AG04450 (cell line): ENCODE measurements at regions of chr4 and their contacts with region 1.

Region 1: GRCh38 chr4:30721185-30722091 is 1.3 kb downstream of the PCDH7 start:
- DNase-seq: no peak
- H3K4me3 ChIP-seq: peak overlapping the region; percentile 87
- H3K27ac ChIP-seq: no peak overlapping the region
- H3K27me3 ChIP-seq: no peaks in the 10 kb centered on the region
- CTCF ChIP-seq: no peak

Region 2: DNA sequence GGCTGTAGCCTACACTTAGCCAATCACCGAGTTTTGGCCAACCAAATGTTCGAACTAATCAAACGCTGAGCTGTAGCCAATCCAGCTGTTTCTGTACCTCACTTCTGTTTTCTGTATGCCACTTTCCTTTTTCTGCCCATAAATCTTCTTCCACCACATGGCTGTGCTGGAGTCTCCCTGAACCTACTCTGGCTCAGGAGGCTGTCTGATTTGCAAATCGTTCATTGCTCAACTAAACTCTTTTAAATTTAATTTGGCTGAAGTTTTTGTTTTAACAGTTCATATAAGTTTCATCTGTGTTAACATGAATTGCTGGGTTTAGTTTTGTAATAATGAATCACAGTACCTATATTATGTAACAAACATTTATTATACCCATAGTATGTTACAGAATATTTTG is 162.0 kb before region 1 on chr4:
- CTCF ChIA-PET with region 1: no interaction called
- POLR2A ChIA-PET with region 1: no interaction called
- DNase-seq: no peak
- H3K4me3 ChIP-seq: no peak overlapping the region
- H3K27ac ChIP-seq: no peak overlapping the region
- H3K27me3 ChIP-seq: no peaks in the 10 kb centered on the region
- CTCF ChIP-seq: no peak

Region 3: GRCh38 chr4:30770049-30770549 is 48.7 kb after region 1 on chr4:
- CTCF ChIA-PET with region 1: interaction called, 10 read pairs
- POLR2A ChIA-PET with region 1: interaction called, 3 read pairs
- DNase-seq: no peak
- H3K4me3 ChIP-seq: no peak overlapping the region
- H3K27ac ChIP-seq: no peak overlapping the region
- H3K27me3 ChIP-seq: no peaks in the 10 kb centered on the region
- CTCF ChIP-seq: no peak

Region 4: GRCh38 chr4:30792601-30793000 is 71.2 kb after region 1 on chr4:
- CTCF ChIA-PET with region 1: no interaction called
- POLR2A ChIA-PET with region 1: no interaction called
- DNase-seq: no peak
- H3K4me3 ChIP-seq: no peak overlapping the region
- H3K27ac ChIP-seq: no peak overlapping the region
- H3K27me3 ChIP-seq: no peaks in the 10 kb centered on the region
- CTCF ChIP-seq: no peak